ENCODE measurements at regions of chr9 and their contacts with region 1.

Region 1: GRCh38 chr9:68844631-68845612 is 139.9 kb downstream of the PIP5K1B start:
- ATAC-seq: peak in 3 of 8 experiments; percentile 33 to 68 (median 52)
- H3K4me3 ChIP-seq: no peak overlapping the region
- H3K27ac ChIP-seq: no peak overlapping the region
- H3K4me1 ChIP-seq: no peaks in the 10 kb centered on the region

Region 2: GRCh38 chr9:68643901-68644809 is 200.8 kb before region 1 on chr9:
- in situ Hi-C with region 1: loop called in 1 of 9 experiments (anchors 25 kb)
- ATAC-seq: no peak
- H3K4me3 ChIP-seq: no peak overlapping the region
- H3K27ac ChIP-seq: no peak overlapping the region
- H3K4me1 ChIP-seq: no peaks in the 10 kb centered on the region

Region 3: DNA sequence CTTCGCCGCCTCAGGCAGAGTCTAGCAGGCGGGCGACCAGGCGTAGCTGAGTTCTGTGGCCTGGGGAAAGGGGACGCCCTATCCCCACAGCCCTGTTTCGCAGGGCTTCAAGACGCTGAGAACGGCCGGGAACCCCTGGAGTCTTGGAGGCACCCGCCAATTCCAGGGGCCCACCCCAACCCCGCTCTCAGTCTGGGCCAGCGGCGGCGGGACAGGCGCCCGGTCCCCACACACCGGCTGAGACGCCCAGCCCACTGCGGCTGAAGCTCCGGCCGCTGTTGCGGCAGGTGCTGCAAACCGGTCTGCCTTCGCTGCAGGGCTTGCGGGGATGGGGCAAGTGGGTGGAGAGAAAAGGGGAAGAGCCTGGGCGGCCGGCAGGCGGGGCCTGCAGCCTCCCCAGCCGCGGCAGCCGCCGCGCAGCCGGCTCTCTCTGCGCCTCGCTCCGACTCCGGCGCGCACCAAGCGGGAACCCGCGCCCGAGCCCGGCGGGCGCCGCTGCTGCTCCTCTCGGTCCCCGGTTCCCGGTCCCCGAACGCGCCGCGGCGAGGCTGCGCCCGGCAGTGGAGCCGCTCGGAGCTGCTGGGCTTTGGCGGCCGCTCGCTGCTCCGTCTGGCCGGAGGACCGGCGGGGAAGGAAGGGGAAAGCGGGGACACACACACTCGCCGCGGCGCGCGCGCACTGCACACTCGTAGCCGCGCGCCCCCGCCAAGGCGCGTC is 139.9 kb before region 1 on chr9 and contains the start of gene PIP5K1B:
- in situ Hi-C with region 1: loop called in 2 of 9 experiments (anchors 25 kb)
- ATAC-seq: peak; percentile 66 to 96 (median 78)
- H3K4me3 ChIP-seq: peak within 1 kb of the TSS; percentile 60 to 98 (median 87)
- H3K27ac ChIP-seq: peak within 1 kb of the TSS in 1 of 2 donors; percentile 33
- H3K4me1 ChIP-seq: peaks cover 4 to 7% of the 10 kb centered on the region in 2 donors
- total RNA-seq, gene PIP5K1B: 0.18 to 2.4 (median 0.47) TPM

Measured in motor neuron (in vitro differentiated cells).